HCT116 (cell line): ENCODE measurements at regions of chr4 and their contacts with region 1.

Region 1: DNA sequence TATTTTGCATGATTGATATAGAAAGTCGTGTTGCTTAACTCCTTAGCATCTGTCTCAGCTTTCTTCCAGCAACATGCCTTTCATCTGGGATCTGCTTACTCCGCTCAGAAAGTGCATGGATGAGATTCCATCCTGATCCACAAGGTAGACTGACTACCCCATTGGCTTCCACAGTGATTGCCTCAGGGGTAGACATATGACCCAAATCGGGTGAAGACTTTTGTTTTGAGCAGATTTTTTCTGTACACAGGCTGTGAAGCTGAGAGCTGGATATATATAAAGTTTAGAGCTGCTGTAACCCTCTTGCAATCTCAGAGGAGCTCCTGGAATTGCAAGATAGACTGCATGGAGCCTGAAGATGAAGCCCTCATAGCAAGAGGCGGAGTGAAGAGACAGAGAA is 8.7 kb upstream of the HERC6 start:
- DNase-seq: no peak
- ATAC-seq: no peak
- H3K4me3 ChIP-seq: no peak overlapping the region
- H3K27ac ChIP-seq: no peak overlapping the region
- H3K4me1 ChIP-seq: no peaks in the 10 kb centered on the region
- H3K27me3 ChIP-seq: no peaks in the 10 kb centered on the region
- CTCF ChIP-seq: no peak
- POLR2A ChIP-seq: no peak
- RAD21 ChIP-seq: no peak

Region 2: DNA sequence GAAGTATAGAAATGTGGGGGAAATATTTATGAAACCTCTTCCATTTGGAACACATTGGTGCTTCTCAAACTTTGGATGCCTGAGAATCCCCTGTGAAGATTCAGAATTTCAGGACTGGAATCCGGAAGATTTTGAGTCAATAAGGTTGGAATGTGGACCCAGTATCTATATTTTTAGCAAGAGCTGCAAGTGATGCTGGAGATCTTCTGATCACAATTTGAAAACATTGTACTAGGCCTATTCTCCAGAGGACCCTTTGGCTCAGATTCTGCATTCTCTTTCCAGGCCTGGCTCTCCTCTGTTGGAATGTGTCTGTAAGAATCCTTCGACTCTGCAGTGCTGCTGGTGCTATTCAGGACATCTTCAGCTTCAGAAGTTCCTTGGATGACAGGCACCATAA is 364.9 kb before region 1 on chr4:
- CTCF ChIA-PET with region 1: no interaction called
- POLR2A ChIA-PET with region 1: no interaction called
- RAD21 ChIA-PET with region 1: no interaction called
- intact Hi-C with region 1: no loop called
- DNase-seq: no peak
- ATAC-seq: no peak
- H3K4me3 ChIP-seq: no peak overlapping the region
- H3K27ac ChIP-seq: no peak overlapping the region
- H3K4me1 ChIP-seq: peaks cover 5 to 18% of the 10 kb centered on the region in 2 experiments; a peak in 3 of 4 replicates
- H3K27me3 ChIP-seq: no peaks in the 10 kb centered on the region
- CTCF ChIP-seq: no peak
- POLR2A ChIP-seq: no peak
- RAD21 ChIP-seq: no peak

Region 3: GRCh38 chr4:88225232-88226105 is 144.5 kb before region 1 on chr4:
- CTCF ChIA-PET with region 1: no interaction called
- POLR2A ChIA-PET with region 1: no interaction called
- RAD21 ChIA-PET with region 1: no interaction called
- intact Hi-C with region 1: loop called (anchors 2 kb)
- DNase-seq: no peak
- ATAC-seq: no peak
- H3K4me3 ChIP-seq: no peak overlapping the region
- H3K27ac ChIP-seq: no peak overlapping the region
- H3K4me1 ChIP-seq: no peaks in the 10 kb centered on the region
- H3K27me3 ChIP-seq: no peaks in the 10 kb centered on the region
- CTCF ChIP-seq: no peak
- POLR2A ChIP-seq: no peak
- RAD21 ChIP-seq: no peak

Region 4: GRCh38 chr4:88514557-88515511 is 144.9 kb after region 1 on chr4:
- CTCF ChIA-PET with region 1: interaction called, 13 read pairs
- POLR2A ChIA-PET with region 1: no interaction called
- RAD21 ChIA-PET with region 1: interaction called, 3 read pairs
- intact Hi-C with region 1: loop called (anchors 1 kb)
- DNase-seq: no peak
- ATAC-seq: no peak
- H3K4me3 ChIP-seq: no peak overlapping the region
- H3K27ac ChIP-seq: no peak overlapping the region
- H3K4me1 ChIP-seq: no peaks in the 10 kb centered on the region
- H3K27me3 ChIP-seq: no peaks in the 10 kb centered on the region
- CTCF ChIP-seq: no peak
- POLR2A ChIP-seq: no peak
- RAD21 ChIP-seq: no peak